GM12878 (cell line): ENCODE measurements at regions of chr3 and their contacts with region 1.

Region 1: DNA sequence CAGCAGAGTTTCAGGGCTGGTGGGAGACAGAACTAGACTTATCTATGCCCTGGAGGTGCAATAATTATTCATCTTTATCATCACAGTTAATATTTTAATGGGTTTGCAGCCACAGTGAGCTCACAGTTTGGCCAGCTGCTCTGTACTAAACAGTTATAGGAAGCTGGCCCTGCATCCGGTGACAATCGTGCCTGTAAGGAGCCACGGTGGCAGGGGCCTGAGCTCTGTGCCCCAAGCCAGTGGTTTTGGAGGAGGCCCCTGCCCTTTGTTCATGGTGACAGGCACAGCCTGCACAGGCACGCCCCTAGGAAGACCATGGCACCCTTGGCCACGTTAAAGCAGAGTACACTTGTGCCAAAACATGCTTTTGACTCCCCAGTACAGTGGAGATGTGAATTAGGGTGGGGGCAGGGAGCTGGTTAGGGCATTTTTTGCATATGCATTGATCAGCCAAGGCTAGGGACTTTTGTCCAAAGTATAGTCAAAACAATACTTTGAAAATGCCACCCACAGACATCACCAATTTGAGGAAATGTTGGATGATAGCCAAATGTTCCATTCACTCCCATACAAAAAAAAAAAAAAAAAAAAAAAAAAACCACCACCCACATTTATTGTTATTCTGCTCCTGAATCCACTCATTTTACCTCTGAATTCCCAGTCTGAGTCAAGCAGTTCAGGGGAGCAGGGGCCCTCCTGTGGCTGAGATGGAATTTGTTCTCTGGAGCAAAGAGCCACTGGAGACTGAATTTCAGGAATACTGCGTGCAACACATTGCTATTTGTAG is 3.4 kb upstream of the RFTN1 start:
- DNase-seq: no peak
- ATAC-seq: peak; percentile 24
- H3K4me3 ChIP-seq: peak overlapping the region; percentile 86
- H3K27ac ChIP-seq: peak overlapping the region; percentile 92
- H3K4me1 ChIP-seq: peaks cover 52% of the 10 kb centered on the region
- H3K27me3 ChIP-seq: no peaks in the 10 kb centered on the region
- CTCF ChIP-seq: peak in 1 of 3 experiments; percentile 16; a peak in 1 of 6 replicates
- EP300 ChIP-seq: peak; percentile 22 to 25; a peak in 2 of 4 replicates
- POLR2A ChIP-seq: peak; percentile 40; the same call in 1 of the 2 replicates
- RAD21 ChIP-seq: no peak

Region 2: GRCh38 chr3:16264708-16265454 is 252.0 kb before region 1 on chr3 and contains the starts of genes DPH3 and OXNAD1:
- CTCF ChIA-PET with region 1: interaction called, 12 read pairs
- POLR2A ChIA-PET with region 1: interaction called, 8 read pairs
- RAD21 ChIA-PET with region 1: interaction called, 7 read pairs
- SMC1A ChIA-PET with region 1: interaction called, 5 read pairs
- in situ Hi-C with region 1: no loop called
- intact Hi-C with region 1: no loop called
- DNase-seq: peak; percentile 95
- ATAC-seq: peak; percentile 98
- H3K4me3 ChIP-seq: peak within 1 kb of the TSS; percentile 91
- H3K27ac ChIP-seq: peak within 1 kb of the TSS; percentile 86
- H3K4me1 ChIP-seq: peaks cover 3% of the 10 kb centered on the region
- H3K27me3 ChIP-seq: no peaks in the 10 kb centered on the region
- CTCF ChIP-seq: no peak
- EP300 ChIP-seq: no peak
- POLR2A ChIP-seq: peak; percentile 58
- RAD21 ChIP-seq: no peak
- polyA plus RNA-seq, gene DPH3: 67.1 to 71.8 TPM
- polyA plus RNA-seq, gene OXNAD1: 5.6 to 6.9 TPM

Region 3: DNA sequence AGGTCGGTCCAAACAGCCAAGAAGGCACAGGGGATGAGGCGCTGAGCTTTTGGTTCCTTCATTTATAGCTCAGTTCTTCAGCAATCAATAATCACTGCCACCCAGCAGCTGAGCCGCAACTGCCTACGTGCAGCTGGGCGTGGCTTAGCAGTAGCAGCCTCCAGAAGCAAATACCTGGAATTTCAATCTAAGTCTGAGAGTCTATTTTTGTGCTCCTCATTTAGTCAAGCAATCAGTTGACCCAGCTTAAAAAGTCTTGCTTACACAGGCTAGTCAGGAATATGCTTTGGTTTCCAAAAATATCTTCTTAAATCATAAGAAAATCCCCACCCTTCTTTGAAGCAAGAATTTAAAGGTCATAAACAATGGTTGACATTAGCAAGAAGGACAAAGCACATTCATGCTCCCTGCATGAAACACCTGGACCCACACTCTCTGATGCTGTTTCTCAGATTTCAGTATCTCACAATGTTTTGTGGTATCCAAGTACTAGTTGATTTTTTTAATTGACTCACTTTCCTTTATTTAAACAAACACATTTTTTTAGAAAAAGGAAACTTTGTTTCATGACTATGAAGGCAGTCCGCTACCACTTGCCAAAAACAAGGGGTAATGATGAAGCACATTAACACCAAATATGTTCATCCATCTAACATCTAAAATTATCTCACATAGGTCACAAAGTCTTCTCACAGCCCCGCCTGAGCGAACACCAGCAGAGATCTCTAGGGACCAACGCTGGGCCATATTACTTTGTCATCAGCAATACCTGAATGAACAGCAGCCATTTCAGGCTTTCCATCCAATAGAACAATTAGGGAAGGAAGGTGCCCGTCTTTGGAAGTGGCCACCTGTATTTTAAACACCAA is 145.8 kb before region 1 on chr3:
- CTCF ChIA-PET with region 1: interaction called, 7 read pairs
- POLR2A ChIA-PET with region 1: interaction called, 66 read pairs
- RAD21 ChIA-PET with region 1: interaction called, 52 read pairs
- SMC1A ChIA-PET with region 1: interaction called, 125 read pairs
- in situ Hi-C with region 1: loop called (anchors 5 kb)
- intact Hi-C with region 1: no loop called
- DNase-seq: no peak
- ATAC-seq: peak; percentile 41
- H3K4me3 ChIP-seq: peak overlapping the region; percentile 23; the same call in 1 of the 2 replicates
- H3K27ac ChIP-seq: peak overlapping the region; percentile 96
- H3K4me1 ChIP-seq: peaks cover 62% of the 10 kb centered on the region
- H3K27me3 ChIP-seq: no peaks in the 10 kb centered on the region
- CTCF ChIP-seq: no peak
- EP300 ChIP-seq: peak in 1 of 2 experiments; percentile 67; a peak in 3 of 4 replicates
- POLR2A ChIP-seq: no peak
- RAD21 ChIP-seq: no peak

Region 4: DNA sequence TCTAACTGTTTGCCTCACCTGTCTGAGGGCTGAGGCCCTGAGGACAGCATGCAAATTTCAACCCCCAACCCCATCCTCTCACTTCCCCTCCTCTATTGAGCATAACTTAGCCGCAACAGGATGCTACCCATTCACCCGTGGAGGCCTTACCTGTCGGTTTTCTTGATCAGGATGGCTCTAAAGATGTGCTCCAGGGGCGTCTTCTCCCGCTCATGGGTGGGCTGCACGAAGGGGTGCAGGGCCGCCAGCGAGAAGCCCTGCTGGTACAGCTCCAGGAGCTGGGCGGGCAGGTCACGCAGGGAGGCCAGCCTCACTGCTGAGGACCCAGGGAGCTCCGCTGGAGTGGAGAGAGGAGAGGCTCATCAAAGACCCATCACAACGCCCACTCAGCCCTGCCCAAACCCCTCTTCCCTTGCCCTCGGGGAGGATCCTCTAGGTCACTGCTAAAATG is 83.2 kb before region 1 on chr3:
- CTCF ChIA-PET with region 1: interaction called, 4 read pairs
- POLR2A ChIA-PET with region 1: interaction called, 12 read pairs
- RAD21 ChIA-PET with region 1: interaction called, 74 read pairs
- SMC1A ChIA-PET with region 1: interaction called, 175 read pairs
- in situ Hi-C with region 1: no loop called
- intact Hi-C with region 1: loop called (anchors 1 kb)
- DNase-seq: peak; percentile 74
- ATAC-seq: peak; percentile 89
- H3K4me3 ChIP-seq: no peak overlapping the region; the same call in 1 of the 2 replicates
- H3K27ac ChIP-seq: peak overlapping the region; percentile 59
- H3K4me1 ChIP-seq: peaks cover 39% of the 10 kb centered on the region
- H3K27me3 ChIP-seq: no peaks in the 10 kb centered on the region
- CTCF ChIP-seq: no peak
- EP300 ChIP-seq: peak; percentile 80 to 95
- POLR2A ChIP-seq: no peak
- RAD21 ChIP-seq: no peak; the same call in 1 of the 2 replicates

Region 5: DNA sequence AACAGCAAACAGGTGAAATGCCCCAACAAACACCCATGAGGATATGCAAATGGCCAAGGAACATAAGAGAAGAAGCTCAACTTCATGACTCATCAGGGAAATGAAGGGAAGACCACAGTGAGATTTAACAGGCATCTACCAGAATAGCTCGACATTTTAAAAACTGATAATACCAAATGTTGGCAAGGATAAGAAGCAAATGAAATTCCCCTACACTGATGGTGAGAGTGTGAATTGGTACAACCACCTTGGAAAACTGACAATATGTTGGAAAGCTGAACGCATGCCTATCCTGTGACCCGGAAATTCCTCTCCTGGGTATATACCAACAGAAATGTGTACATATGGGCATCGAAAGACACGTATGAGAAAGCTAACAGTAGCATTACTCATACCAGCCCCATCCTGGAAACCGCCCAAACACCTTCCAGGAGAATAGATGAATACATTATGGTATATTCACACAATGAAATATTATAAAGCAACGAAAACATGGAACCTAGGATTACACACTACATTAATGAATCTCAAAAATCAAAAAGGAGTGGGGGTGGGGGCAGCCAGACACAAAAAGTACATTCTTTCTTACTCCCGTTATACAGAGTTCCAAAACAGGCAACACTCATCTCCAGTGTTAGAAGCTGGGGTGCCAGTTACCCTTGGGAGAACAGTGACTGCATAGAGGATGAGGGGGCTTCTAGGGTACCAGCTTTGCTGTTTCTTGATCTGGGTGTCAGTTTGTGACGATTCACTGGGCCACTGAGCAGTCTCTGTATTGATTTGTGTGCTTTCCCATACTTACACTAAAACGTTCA is 20.3 kb before region 1 on chr3:
- CTCF ChIA-PET with region 1: interaction called, 8 read pairs
- POLR2A ChIA-PET with region 1: interaction called, 13 read pairs
- RAD21 ChIA-PET with region 1: interaction called, 70 read pairs
- SMC1A ChIA-PET with region 1: interaction called, 83 read pairs
- in situ Hi-C with region 1: no loop called
- intact Hi-C with region 1: no loop called
- DNase-seq: peak; percentile 60
- ATAC-seq: peak; percentile 73
- H3K4me3 ChIP-seq: no peak overlapping the region
- H3K27ac ChIP-seq: peak overlapping the region; percentile 29; the same call in 1 of the 2 replicates
- H3K4me1 ChIP-seq: peaks cover 48% of the 10 kb centered on the region
- H3K27me3 ChIP-seq: no peaks in the 10 kb centered on the region
- CTCF ChIP-seq: no peak
- EP300 ChIP-seq: no peak
- POLR2A ChIP-seq: no peak
- RAD21 ChIP-seq: no peak

Region 6: DNA sequence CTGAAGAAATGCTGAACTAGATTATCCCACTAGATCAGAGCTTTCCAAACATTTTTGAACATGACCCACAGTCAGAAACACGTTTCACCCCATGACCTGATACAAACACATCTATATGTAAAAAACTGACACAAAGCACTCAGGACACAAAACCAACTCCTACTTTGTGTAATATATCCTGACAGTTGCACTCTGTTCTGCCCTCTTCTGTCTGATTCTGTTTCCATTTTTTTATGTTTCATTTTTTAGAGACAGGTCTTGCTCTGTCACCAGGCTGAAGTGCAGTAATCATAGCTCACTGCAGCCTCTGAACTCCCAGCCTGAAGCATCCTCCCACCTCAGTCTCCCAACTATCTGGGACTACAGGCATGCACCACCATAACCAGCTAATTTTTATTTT is 12.4 kb after region 1 on chr3:
- CTCF ChIA-PET with region 1: interaction called, 15 read pairs
- POLR2A ChIA-PET with region 1: interaction called, 22 read pairs
- RAD21 ChIA-PET with region 1: interaction called, 15 read pairs
- SMC1A ChIA-PET with region 1: interaction called, 36 read pairs
- in situ Hi-C with region 1: no loop called
- intact Hi-C with region 1: no loop called
- DNase-seq: no peak
- ATAC-seq: peak; percentile 72
- H3K4me3 ChIP-seq: no peak overlapping the region
- H3K27ac ChIP-seq: no peak overlapping the region
- H3K4me1 ChIP-seq: no peaks in the 10 kb centered on the region
- H3K27me3 ChIP-seq: no peaks in the 10 kb centered on the region
- CTCF ChIP-seq: peak in 2 of 3 experiments; percentile 22 to 24; a peak in 3 of 6 replicates
- EP300 ChIP-seq: no peak
- POLR2A ChIP-seq: no peak
- RAD21 ChIP-seq: peak; percentile 49